ENCODE measurements at regions of chr16 and their contacts with region 1.

Region 1: DNA sequence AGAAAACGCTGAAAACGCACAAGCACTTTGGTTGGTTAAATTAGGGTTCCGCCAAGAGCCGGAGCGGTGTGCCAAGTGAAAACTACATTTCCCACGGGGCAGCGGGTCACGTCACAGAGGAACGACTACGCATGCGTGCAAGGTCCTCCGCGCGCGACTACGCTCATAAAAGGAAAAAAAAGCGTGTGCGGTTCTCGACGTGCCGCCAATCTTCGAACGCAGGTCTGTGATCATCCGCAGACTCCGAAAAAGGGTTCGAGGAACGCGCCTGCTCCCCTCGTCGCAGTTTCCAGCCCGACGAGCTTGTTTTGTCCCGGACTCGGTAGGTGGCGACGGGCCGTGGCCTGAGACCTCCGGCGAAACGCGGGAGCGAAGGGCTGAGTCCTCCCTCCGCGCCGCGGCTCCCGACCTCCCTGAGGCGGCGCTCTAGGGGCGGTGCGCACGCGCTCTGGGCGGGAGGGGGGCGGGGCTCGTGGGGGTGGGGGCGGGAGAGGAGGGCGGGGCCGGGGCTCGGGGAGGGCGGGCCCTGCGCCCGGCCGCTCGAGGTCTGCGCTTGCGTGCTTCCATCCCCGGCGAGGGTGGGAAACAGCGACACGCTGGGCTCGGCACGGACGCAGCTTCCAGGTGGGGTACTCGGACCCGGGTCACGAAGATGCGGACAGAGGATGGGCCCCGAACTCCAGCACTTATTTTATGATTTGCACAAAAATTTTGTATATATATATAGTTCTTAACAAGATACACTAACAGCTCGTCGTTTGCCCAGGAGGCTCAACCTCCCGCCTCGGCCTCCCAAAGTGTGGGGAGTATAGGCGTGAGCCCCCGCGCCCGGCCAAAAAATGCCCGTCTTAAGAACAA is at the start of gene SGF29:
- DNase-seq: peak; percentile 95
- H3K4me3 ChIP-seq: peak within 1 kb of the TSS; percentile 51 to 81 (median 59)
- H3K27ac ChIP-seq: peak within 1 kb of the TSS; percentile 97 to 99 (median 98)
- H3K4me1 ChIP-seq: peaks cover 8 to 51% (median 33%) of the 10 kb centered on the region in 6 donors
- H3K27me3 ChIP-seq: peaks cover 0 to 12% (median 0%) of the 10 kb centered on the region in 7 donors
- CTCF ChIP-seq: peak in 7 of 11 experiments; percentile 26 to 62 (median 48)
- POLR2A ChIP-seq: peak in 2 of 3 donors; percentile 83 to 91
- total RNA-seq, gene SGF29: 22.9 to 35.1 (median 26.7) TPM

Region 2: GRCh38 chr16:28491970-28492474 is 62.0 kb before region 1 on chr16 and contains the start of gene CLN3:
- intact Hi-C with region 1: loop called (anchors 10 kb)
- DNase-seq: peak; percentile 96
- H3K4me3 ChIP-seq: peak within 1 kb of the TSS; percentile 82 to 98 (median 94)
- H3K27ac ChIP-seq: peak within 1 kb of the TSS; percentile 93 to 99 (median 96)
- H3K4me1 ChIP-seq: peaks cover 23 to 85% (median 63%) of the 10 kb centered on the region in 6 donors
- H3K27me3 ChIP-seq: no peaks in the 10 kb centered on the region
- CTCF ChIP-seq: no peak
- POLR2A ChIP-seq: peak in 2 of 3 donors; percentile 32 to 48
- total RNA-seq, gene CLN3: 32.5 to 44.1 (median 38.3) TPM

Region 3: DNA sequence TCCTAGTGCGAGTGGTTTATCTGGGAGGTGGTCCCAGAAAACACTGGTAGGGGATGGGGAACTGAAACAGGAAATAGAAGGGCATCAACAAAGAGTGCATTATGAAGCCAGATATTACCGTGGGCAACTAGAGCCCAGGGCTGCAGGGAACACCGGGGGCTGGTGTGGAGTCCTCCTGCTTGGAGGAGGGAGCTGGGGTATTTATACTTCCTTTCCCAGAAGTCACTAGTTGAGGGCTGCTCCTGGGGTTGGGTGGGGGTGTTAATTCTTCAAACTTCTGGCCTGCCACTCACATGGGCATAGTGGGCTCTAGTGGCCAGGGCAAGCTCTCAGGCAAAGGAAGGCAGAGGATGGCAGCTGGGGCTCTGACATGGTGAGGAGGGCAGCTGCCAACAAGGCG is 445.6 kb after region 1 on chr16:
- intact Hi-C with region 1: no loop called
- DNase-seq: no peak
- H3K4me3 ChIP-seq: no peak overlapping the region
- H3K27ac ChIP-seq: no peak overlapping the region
- H3K4me1 ChIP-seq: peaks cover 0 to 7% (median 0%) of the 10 kb centered on the region in 6 donors
- H3K27me3 ChIP-seq: no peaks in the 10 kb centered on the region
- CTCF ChIP-seq: no peak
- POLR2A ChIP-seq: no peak

Measured in spleen (tissue), 13 donors.